CD8-positive, alpha-beta T cell (primary cell): ENCODE measurements at regions of chr17 and their contacts with region 1.

Region 1: DNA sequence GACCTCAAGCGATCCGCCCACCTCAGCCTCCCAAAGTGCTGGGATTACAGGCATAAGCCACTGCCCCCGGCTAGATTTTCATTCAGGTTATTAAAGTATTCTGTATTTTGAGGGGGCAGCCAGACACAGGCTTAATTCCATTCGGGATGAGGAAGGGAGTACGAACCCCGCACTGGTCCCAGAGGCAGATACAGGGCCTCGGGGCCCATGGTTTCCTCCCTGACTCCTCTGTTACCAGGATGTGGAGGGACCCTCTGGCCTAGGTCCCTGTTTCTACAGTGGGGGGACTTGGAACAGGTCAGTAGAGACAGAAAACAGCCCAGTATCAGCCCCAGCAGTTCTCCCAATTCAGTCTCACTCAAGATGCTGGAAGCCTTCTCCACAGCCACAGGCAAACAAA is 42.0 kb downstream of the PECAM1 start:
- DNase-seq: no peak
- ATAC-seq: no peak
- H3K4me3 ChIP-seq: no peak overlapping the region
- H3K4me3 Mint-ChIP-seq: no peak overlapping the region
- H3K27ac ChIP-seq: peak overlapping the region in 1 of 2 experiments; percentile 40
- H3K27ac Mint-ChIP-seq: peak overlapping the region; percentile 98
- H3K4me1 ChIP-seq: peaks cover 34% of the 10 kb centered on the region
- H3K4me1 Mint-ChIP-seq: peaks cover 37% of the 10 kb centered on the region
- H3K27me3 ChIP-seq: no peaks in the 10 kb centered on the region
- H3K27me3 Mint-ChIP-seq: no peaks in the 10 kb centered on the region
- CTCF ChIP-seq: no peak

Region 2: GRCh38 chr17:64320613-64321553 is 27.8 kb before region 1 on chr17:
- CTCF ChIA-PET with region 1: interaction called, 11 read pairs
- POLR2A ChIA-PET with region 1: no interaction called
- intact Hi-C with region 1: loop called (anchors 1 to 2 kb)
- DNase-seq: peak in 8 of 9 experiments; percentile 38 to 76 (median 59)
- ATAC-seq: peak; percentile 68
- H3K4me3 ChIP-seq: no peak overlapping the region
- H3K4me3 Mint-ChIP-seq: peak overlapping the region; percentile 39
- H3K27ac ChIP-seq: peak overlapping the region in 1 of 2 experiments; percentile 33
- H3K27ac Mint-ChIP-seq: peak overlapping the region; percentile 88
- H3K4me1 ChIP-seq: no peaks in the 10 kb centered on the region
- H3K4me1 Mint-ChIP-seq: peaks cover 38% of the 10 kb centered on the region
- H3K27me3 ChIP-seq: no peaks in the 10 kb centered on the region
- H3K27me3 Mint-ChIP-seq: no peaks in the 10 kb centered on the region
- CTCF ChIP-seq: peak; percentile 84

Region 3: DNA sequence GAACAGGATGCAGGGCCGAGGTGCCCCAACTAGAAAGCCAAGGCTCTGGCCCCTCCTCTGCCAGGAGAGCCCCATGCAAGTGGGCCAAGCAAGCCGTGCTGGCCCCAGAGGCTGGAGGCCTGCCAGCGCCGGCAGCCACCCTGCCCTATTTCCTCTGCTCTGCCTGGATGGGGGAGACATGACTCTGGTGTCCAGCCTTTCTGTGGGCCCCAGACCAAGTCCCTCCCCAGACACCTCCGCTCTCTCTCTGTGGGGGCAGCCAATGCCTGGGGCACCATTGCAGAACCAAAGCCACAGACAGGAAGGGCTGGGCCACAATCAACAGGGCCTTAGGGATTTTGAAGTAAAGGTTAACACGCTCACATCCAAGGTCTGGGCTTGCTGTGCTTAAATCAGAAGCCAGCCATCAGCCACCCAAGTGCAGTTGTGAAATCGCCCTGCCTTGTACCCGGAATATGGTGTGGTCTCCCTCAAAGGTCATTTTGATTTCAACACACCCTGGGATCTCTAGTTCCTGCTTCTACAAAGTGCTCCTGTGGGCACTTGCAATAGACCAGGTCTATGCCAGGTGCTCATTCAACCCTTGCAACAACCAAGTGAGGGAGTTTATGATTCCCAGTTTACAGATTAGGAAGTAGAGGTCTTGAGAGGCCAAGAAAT is 22.1 kb before region 1 on chr17:
- CTCF ChIA-PET with region 1: interaction called, 11 read pairs
- POLR2A ChIA-PET with region 1: interaction called, 10 read pairs
- intact Hi-C with region 1: loop called (anchors 1 to 2 kb)
- DNase-seq: peak in 1 of 9 experiments; percentile 55
- ATAC-seq: no peak
- H3K4me3 ChIP-seq: no peak overlapping the region
- H3K4me3 Mint-ChIP-seq: peak overlapping the region; percentile 19
- H3K27ac ChIP-seq: peak overlapping the region in 1 of 2 experiments; percentile 24
- H3K27ac Mint-ChIP-seq: no peak overlapping the region
- H3K4me1 ChIP-seq: peaks cover 28% of the 10 kb centered on the region
- H3K4me1 Mint-ChIP-seq: peaks cover 32% of the 10 kb centered on the region
- H3K27me3 ChIP-seq: no peaks in the 10 kb centered on the region
- H3K27me3 Mint-ChIP-seq: no peaks in the 10 kb centered on the region
- CTCF ChIP-seq: no peak

Region 4: GRCh38 chr17:64369007-64369893 is 20.6 kb after region 1 on chr17:
- CTCF ChIA-PET with region 1: no interaction called
- POLR2A ChIA-PET with region 1: no interaction called
- intact Hi-C with region 1: loop called in 1 of 2 experiments (anchors 2 kb)
- DNase-seq: no peak
- ATAC-seq: peak; percentile 26
- H3K4me3 ChIP-seq: no peak overlapping the region
- H3K4me3 Mint-ChIP-seq: no peak overlapping the region
- H3K27ac ChIP-seq: no peak overlapping the region
- H3K27ac Mint-ChIP-seq: peak overlapping the region; percentile 78
- H3K4me1 ChIP-seq: peaks cover 9% of the 10 kb centered on the region
- H3K4me1 Mint-ChIP-seq: peaks cover 30% of the 10 kb centered on the region
- H3K27me3 ChIP-seq: no peaks in the 10 kb centered on the region
- H3K27me3 Mint-ChIP-seq: no peaks in the 10 kb centered on the region
- CTCF ChIP-seq: no peak

Region 5: GRCh38 chr17:64384253-64385186 is 35.9 kb after region 1 on chr17:
- CTCF ChIA-PET with region 1: interaction called, 3 read pairs
- POLR2A ChIA-PET with region 1: no interaction called
- intact Hi-C with region 1: loop called in 1 of 2 experiments (anchors 2 kb)
- DNase-seq: peak in 3 of 9 experiments; percentile 45 to 68 (median 56)
- ATAC-seq: peak; percentile 47
- H3K4me3 ChIP-seq: peak overlapping the region in 1 of 2 experiments; percentile 5
- H3K4me3 Mint-ChIP-seq: peak overlapping the region; percentile 55
- H3K27ac ChIP-seq: peak overlapping the region in 1 of 2 experiments; percentile 69
- H3K27ac Mint-ChIP-seq: peak overlapping the region; percentile 81
- H3K4me1 ChIP-seq: peaks cover 63% of the 10 kb centered on the region
- H3K4me1 Mint-ChIP-seq: peaks cover 75% of the 10 kb centered on the region
- H3K27me3 ChIP-seq: no peaks in the 10 kb centered on the region
- H3K27me3 Mint-ChIP-seq: no peaks in the 10 kb centered on the region
- CTCF ChIP-seq: no peak

Region 6: DNA sequence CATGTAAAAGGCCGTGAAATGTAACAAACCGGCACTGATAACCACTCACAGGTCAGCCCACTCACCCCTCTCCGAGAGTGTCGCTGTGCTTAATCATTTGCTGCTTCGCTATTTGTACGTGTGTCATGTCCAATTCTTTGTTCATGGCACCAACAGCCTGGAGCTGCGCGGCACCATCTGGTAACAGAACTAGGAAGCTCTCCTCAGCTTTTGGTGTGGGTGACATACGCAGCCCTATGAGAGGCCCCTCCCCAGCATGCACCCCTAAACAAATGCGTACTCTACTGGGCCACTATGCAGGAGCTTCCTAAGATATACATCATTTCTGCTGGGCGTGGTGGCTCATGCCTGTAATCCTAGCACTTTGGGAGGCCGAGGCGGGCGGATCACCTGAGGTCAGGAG is 44.3 kb after region 1 on chr17:
- CTCF ChIA-PET with region 1: no interaction called
- POLR2A ChIA-PET with region 1: interaction called, 20 read pairs
- intact Hi-C with region 1: loop called (anchors 1 to 2 kb)
- DNase-seq: peak in 7 of 9 experiments; percentile 28 to 77 (median 63)
- ATAC-seq: peak; percentile 76
- H3K4me3 ChIP-seq: peak overlapping the region; percentile 52 to 56
- H3K4me3 Mint-ChIP-seq: peak overlapping the region; percentile 87
- H3K27ac ChIP-seq: peak overlapping the region; percentile 60 to 78
- H3K27ac Mint-ChIP-seq: peak overlapping the region; percentile 96
- H3K4me1 ChIP-seq: peaks cover 79% of the 10 kb centered on the region
- H3K4me1 Mint-ChIP-seq: peaks cover 61% of the 10 kb centered on the region
- H3K27me3 ChIP-seq: no peaks in the 10 kb centered on the region
- H3K27me3 Mint-ChIP-seq: no peaks in the 10 kb centered on the region
- CTCF ChIP-seq: no peak

Region 7: GRCh38 chr17:65297378-65297777 is 948.7 kb after region 1 on chr17:
- CTCF ChIA-PET with region 1: no interaction called
- POLR2A ChIA-PET with region 1: no interaction called
- intact Hi-C with region 1: no loop called
- DNase-seq: no peak
- ATAC-seq: no peak
- H3K4me3 ChIP-seq: no peak overlapping the region
- H3K4me3 Mint-ChIP-seq: no peak overlapping the region
- H3K27ac ChIP-seq: no peak overlapping the region
- H3K27ac Mint-ChIP-seq: no peak overlapping the region
- H3K4me1 ChIP-seq: no peaks in the 10 kb centered on the region
- H3K4me1 Mint-ChIP-seq: peaks cover 4% of the 10 kb centered on the region
- H3K27me3 ChIP-seq: no peaks in the 10 kb centered on the region
- H3K27me3 Mint-ChIP-seq: peaks cover under 1% of the 10 kb centered on the region
- CTCF ChIP-seq: no peak